Pancreas (tissue), 10 donors: ENCODE measurements at regions of chr19 and their contacts with region 1.

Region 1: DNA sequence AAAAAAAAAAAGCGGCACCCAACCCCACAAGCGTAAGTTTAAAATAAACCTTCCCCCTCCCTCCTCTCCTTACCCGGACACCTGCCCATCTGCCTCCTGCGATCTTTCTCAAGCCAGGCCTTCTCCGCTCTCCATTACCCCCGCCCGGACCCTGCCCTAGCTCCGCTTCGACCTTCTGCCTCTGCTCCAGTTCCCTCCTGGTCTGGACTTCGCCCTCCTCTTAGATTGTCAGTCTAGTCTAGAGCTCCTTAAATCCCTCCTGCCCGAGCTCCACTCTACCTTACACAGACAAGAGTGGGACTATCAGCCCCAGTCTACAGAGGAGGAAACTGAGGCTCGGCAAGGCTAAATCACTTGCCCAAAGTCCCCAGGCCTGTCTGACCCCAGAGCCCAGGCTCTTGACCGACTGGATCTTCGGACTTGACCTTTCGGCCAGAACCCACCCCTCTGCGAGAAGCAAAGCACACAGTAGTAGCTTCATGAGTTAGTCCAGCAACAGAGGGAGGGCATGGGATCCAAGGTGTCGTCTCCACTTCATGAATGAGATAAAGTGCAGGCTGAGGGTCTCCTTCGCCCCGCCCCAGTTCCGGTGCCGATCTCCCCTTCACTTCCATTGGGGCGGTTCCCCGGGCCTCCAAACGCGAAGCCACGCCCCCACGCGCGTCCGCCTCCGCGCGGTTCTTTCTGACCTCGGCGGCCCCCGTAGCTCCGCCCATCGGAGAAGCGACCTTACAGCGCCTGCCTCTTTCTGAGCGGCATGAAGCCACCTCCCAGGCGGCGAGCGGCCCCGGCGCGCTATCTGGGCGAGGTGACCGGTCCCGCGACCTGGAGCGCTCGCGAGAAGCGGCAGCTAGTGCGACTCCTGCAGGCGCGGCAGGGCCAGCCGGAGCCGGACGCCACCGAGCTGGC is at the start of gene SNAPC2:
- DNase-seq: peak; percentile 96 to 99 (median 98)
- ATAC-seq: peak; percentile 73 to 80 (median 80)
- H3K4me3 ChIP-seq: peak within 1 kb of the TSS; percentile 56 to 88 (median 57)
- H3K27ac ChIP-seq: peak within 1 kb of the TSS; percentile 51 to 84 (median 79)
- H3K4me1 ChIP-seq: peaks cover 6 to 21% (median 15%) of the 10 kb centered on the region in 3 donors
- H3K27me3 ChIP-seq: peaks cover 0 to 6% (median 0%) of the 10 kb centered on the region in 4 donors
- CTCF ChIP-seq: no peak
- total RNA-seq, gene SNAPC2: 4.9 to 11.3 (median 6.7) TPM

Region 2: GRCh38 chr19:7852851-7853769 is 66.8 kb before region 1 on chr19:
- intact Hi-C with region 1: loop called in 2 of 3 experiments (anchors 5 to 10 kb)
- DNase-seq: peak; percentile 94 to 99 (median 96)
- ATAC-seq: peak; percentile 98 to 99 (median 98)
- H3K4me3 ChIP-seq: peak overlapping the region in 1 of 4 donors; percentile 15
- H3K27ac ChIP-seq: peak overlapping the region; percentile 61 to 81 (median 72)
- H3K4me1 ChIP-seq: peaks cover 4 to 5% (median 5%) of the 10 kb centered on the region in 3 donors
- H3K27me3 ChIP-seq: no peaks in the 10 kb centered on the region
- CTCF ChIP-seq: peak; percentile 82 to 97 (median 94)

Region 3: GRCh38 chr19:8064911-8065874 is 145.3 kb after region 1 on chr19:
- intact Hi-C with region 1: no loop called
- DNase-seq: no peak
- ATAC-seq: no peak
- H3K4me3 ChIP-seq: no peak overlapping the region
- H3K27ac ChIP-seq: no peak overlapping the region
- H3K4me1 ChIP-seq: no peaks in the 10 kb centered on the region
- H3K27me3 ChIP-seq: no peaks in the 10 kb centered on the region
- CTCF ChIP-seq: no peak